Thyroid gland (tissue), 4 donors: ENCODE measurements at regions of chr4 and their contacts with region 1.

Region 1: DNA sequence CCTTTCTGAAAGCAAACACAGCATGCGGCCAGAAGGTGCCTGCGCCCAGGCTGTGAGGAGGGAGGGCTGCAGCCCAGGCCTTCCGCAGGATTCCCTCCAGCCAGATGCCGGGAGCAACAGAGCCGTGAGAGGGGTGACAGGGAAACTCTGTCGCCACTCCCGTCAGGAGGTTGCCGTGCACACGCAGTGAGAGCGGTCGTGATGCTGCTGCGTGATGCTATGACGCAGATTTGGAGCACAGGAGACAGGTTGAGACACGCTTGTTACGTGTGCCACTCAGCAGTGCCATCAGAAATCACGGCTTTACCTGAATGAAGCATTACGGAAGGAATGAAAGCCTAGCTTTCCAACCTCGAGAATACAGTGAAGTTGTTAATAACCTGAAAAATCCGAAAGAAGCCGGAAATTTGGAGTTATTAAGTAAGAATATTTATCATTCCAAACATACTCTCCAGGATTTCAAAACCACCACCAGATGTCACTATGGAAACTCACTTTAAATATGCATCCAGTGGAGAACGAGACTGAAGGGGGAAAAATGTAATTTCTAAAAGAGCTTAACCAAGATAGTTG is 54.4 kb downstream of the FAT1 start:
- DNase-seq: no peak
- H3K4me3 ChIP-seq: no peak overlapping the region
- H3K27ac ChIP-seq: no peak overlapping the region
- H3K4me1 ChIP-seq: peaks cover 0 to 4% of the 10 kb centered on the region in 2 donors
- H3K27me3 ChIP-seq: no peaks in the 10 kb centered on the region
- CTCF ChIP-seq: peak in 5 of 6 experiments; percentile 32 to 62 (median 57)
- POLR2A ChIP-seq: no peak

Region 2: DNA sequence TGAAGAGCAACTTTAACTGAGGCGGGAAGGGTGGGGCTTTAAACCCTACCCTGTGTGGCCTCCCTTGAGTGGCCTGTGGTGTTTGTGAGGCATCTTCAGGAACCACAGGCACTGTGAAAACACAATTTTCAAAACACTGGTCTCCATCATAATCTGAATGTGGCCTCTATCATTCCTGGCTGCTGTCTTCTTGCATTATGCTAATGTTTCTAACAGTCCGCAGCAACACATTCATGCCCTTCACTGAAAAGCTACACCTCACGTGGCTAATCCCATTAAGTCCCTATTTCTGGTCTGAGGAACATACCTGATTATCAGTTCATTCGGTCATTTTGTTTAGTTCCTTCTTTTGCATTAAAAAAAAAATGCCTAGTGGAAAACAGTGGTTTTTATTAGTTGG is 308.7 kb before region 1 on chr4:
- intact Hi-C with region 1: no loop called
- DNase-seq: no peak
- H3K4me3 ChIP-seq: no peak overlapping the region
- H3K27ac ChIP-seq: no peak overlapping the region
- H3K4me1 ChIP-seq: no peaks in the 10 kb centered on the region
- H3K27me3 ChIP-seq: no peaks in the 10 kb centered on the region
- CTCF ChIP-seq: no peak
- POLR2A ChIP-seq: no peak

Region 3: DNA sequence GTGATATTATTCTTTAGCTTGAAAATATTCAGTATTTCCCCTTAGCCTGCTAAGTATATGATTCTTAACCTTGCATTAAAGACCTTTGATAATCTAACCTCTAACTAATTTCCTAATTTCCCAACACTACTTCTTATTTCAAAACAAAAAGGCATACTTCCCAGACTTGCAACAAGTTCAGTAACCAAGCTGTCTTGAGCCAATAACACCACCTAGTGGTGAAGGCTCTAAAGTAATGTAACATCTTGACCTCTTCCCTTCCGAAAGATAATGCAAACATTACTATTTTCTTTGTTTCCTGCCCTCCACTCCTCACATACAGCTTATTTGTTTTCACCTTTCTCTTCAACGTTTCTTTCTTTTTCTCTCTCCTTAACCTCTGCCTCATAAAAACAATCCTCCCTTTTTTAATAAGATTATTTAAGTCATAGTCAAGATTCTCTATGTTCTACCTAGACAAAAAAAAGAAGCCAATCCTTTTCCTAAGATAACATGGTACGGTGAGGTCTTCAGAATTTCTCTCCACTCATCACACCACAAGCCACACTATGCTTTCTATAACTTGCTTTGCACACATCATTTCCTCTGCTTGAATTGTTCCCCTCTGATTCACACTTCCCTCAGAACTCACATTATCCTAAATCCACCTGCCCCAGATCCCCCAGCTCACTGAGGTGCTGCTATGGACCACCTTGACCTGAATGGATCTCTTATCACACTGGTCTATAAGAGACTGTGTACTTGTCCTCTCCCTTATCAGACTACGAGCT is 50.9 kb after region 1 on chr4:
- intact Hi-C with region 1: loop called (anchors 5 kb)
- DNase-seq: no peak
- H3K4me3 ChIP-seq: no peak overlapping the region
- H3K27ac ChIP-seq: no peak overlapping the region
- H3K4me1 ChIP-seq: no peaks in the 10 kb centered on the region
- H3K27me3 ChIP-seq: no peaks in the 10 kb centered on the region
- CTCF ChIP-seq: peak in 4 of 6 experiments; percentile 44 to 66 (median 60)
- POLR2A ChIP-seq: no peak